ENCODE measurements at regions of chr17 and their contacts with region 1.

Region 1: GRCh38 chr17:81959362-81960129 is 1.4 kb downstream of the NOTUM start:
- DNase-seq: peak in 1 of 2 donors; percentile 46
- H3K4me3 ChIP-seq: peak overlapping the region; percentile 25 to 44
- H3K27ac ChIP-seq: no peak overlapping the region
- H3K4me1 ChIP-seq: peaks cover 0 to 29% (median 21%) of the 10 kb centered on the region in 4 donors
- H3K27me3 ChIP-seq: peaks cover 10 to 97% of the 10 kb centered on the region in 2 donors
- CTCF ChIP-seq: peak; percentile 56 to 96

Region 2: DNA sequence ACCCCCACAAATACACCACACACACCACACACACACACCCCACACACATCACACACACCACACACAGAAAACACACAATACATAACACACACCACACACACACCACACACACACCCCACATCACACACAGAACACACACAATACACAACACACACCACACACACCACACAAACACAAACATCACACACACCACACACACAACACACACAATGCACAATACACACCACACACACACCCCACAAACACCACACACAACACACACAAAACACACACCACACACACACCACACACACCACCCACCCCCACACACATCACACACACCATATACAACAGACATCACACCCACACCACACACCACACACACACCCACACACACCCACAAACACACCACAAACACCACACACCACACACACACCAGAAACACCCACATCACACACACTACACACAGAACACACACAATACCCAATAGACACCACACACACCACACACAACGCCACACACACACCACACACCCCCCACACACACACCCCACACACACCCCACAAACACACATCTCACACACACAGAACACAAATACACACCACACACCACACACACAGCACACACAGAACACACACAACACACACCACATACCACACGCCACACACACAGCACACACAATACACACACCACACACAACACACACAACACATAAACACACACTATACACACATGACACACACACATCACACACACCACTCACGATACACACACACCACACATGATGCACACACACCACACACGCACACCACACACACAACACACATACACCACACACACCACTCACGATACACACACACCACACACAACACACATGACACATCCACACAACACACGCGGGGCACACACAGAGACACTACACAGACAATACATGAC is 166.6 kb before region 1 on chr17:
- intact Hi-C with region 1: no loop called
- DNase-seq: no peak
- H3K4me3 ChIP-seq: no peak overlapping the region
- H3K27ac ChIP-seq: no peak overlapping the region
- H3K4me1 ChIP-seq: no peaks in the 10 kb centered on the region
- H3K27me3 ChIP-seq: peaks cover 0 to 28% of the 10 kb centered on the region in 2 donors
- CTCF ChIP-seq: no peak

Region 3: GRCh38 chr17:81804559-81805399 is 154.8 kb before region 1 on chr17:
- intact Hi-C with region 1: no loop called
- DNase-seq: no peak
- H3K4me3 ChIP-seq: peak overlapping the region in 1 of 2 donors; percentile 7
- H3K27ac ChIP-seq: no peak overlapping the region
- H3K4me1 ChIP-seq: peaks cover 0 to 22% (median 17%) of the 10 kb centered on the region in 4 donors
- H3K27me3 ChIP-seq: peaks cover 0 to 91% of the 10 kb centered on the region in 2 donors
- CTCF ChIP-seq: no peak

Region 4: GRCh38 chr17:81871387-81872230 is 87.9 kb before region 1 on chr17:
- intact Hi-C with region 1: no loop called
- DNase-seq: peak; percentile 93 to 97
- H3K4me3 ChIP-seq: peak overlapping the region; percentile 61 to 94
- H3K27ac ChIP-seq: peak overlapping the region; percentile 87 to 97
- H3K4me1 ChIP-seq: peaks cover 0 to 49% (median 32%) of the 10 kb centered on the region in 4 donors
- H3K27me3 ChIP-seq: no peaks in the 10 kb centered on the region
- CTCF ChIP-seq: peak; percentile 20 to 26

Region 5: DNA sequence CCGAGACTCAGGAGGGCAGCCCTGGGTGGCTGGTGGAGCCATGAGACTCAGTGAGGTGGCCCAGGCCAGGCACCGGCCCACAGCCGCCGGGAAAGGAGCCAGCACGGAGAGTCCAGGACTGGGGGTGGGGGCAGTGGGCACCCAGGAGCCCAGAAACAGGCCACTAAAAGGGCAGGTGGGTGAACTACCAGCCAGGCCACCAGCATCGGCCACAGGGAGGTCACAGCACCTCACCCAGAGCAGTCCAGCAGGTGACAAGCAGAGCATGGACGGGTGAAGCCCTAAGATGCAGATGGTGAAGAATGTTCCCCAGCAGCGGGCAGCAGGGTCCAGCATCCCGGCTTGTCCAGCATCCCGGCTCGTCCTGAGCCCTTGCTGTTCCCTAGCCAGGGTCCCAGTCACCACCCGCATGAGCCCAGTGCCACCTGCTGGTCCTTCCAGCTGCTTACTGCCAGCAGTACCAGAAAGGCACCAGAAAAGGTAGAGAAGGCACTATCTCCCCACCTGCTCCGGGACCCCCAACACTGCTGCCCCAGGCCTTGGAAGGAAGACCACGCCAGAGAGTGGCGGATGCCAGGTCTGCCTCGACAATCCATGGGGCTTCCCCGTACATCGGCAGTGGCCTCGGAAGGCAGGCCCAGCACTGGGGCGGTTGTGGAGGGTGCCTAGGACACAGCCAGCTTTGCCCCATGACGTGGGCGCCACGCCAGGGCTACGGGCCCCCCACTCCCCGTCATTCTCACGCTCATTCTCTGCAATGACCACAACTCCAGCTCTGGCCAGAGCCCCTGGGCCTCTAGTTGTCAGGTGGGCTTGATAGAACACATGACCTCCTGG is 61.6 kb after region 1 on chr17:
- intact Hi-C with region 1: loop called (anchors 2 kb)
- DNase-seq: peak; percentile 77 to 86
- H3K4me3 ChIP-seq: peak overlapping the region in 1 of 2 donors; percentile 91
- H3K27ac ChIP-seq: no peak overlapping the region
- H3K4me1 ChIP-seq: peaks cover 0 to 33% (median 25%) of the 10 kb centered on the region in 4 donors
- H3K27me3 ChIP-seq: no peaks in the 10 kb centered on the region
- CTCF ChIP-seq: peak; percentile 66 to 83

Region 6: GRCh38 chr17:82153745-82154375 is 194.3 kb after region 1 on chr17:
- intact Hi-C with region 1: loop called (anchors 10 kb)
- DNase-seq: peak; percentile 70 to 78
- H3K4me3 ChIP-seq: no peak overlapping the region
- H3K27ac ChIP-seq: no peak overlapping the region
- H3K4me1 ChIP-seq: peaks cover 0 to 12% (median 0%) of the 10 kb centered on the region in 4 donors
- H3K27me3 ChIP-seq: no peaks in the 10 kb centered on the region
- CTCF ChIP-seq: peak; percentile 84 to 88